CD14-positive monocyte (primary cell): ENCODE measurements at regions of chr1 and their contacts with region 1.

Region 1: DNA sequence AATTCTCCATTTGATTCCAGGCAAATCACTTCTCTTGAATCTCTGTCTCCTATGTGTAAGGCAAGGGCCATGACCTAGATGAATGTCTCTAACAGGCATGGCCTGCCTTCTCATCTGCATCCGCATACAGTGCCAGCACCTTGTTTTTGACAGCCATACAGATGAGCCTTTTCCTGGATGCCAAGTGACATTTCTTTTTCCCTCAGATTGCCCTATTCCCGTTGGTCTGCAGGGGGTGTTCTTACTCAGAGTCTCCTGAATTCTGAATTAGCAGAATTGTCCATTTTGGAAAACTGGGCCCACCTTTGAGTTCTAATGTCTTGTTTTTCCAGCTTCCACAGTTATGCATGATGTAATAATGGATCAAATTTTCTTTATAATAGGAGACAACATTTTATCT is 88.0 kb upstream of the ADAR start:
- DNase-seq: no peak
- H3K4me3 ChIP-seq: no peak overlapping the region
- H3K4me3 Mint-ChIP-seq: no peak overlapping the region
- H3K27ac ChIP-seq: no peak overlapping the region
- H3K27ac Mint-ChIP-seq: no peak overlapping the region
- H3K4me1 ChIP-seq: peaks cover 15 to 25% of the 10 kb centered on the region in 2 donors
- H3K4me1 Mint-ChIP-seq: peaks cover 21% of the 10 kb centered on the region
- H3K27me3 ChIP-seq: peaks cover 0 to 3% of the 10 kb centered on the region in 2 donors
- H3K27me3 Mint-ChIP-seq: peaks cover 0 to 10% (median 4%) of the 10 kb centered on the region in 3 donors
- CTCF ChIP-seq: peak; percentile 17

Region 2: GRCh38 chr1:154751690-154752089 is 55.7 kb after region 1 on chr1:
- intact Hi-C with region 1: loop called in 1 of 2 experiments (anchors 10 kb)
- DNase-seq: peak; percentile 65 to 78 (median 76)
- H3K4me3 ChIP-seq: no peak overlapping the region
- H3K4me3 Mint-ChIP-seq: peak overlapping the region in 1 of 2 donors; percentile 20
- H3K27ac ChIP-seq: peak overlapping the region in 1 of 2 donors; percentile 42
- H3K27ac Mint-ChIP-seq: peak overlapping the region; percentile 33 to 87 (median 78)
- H3K4me1 ChIP-seq: peaks cover 40 to 52% of the 10 kb centered on the region in 2 donors
- H3K4me1 Mint-ChIP-seq: peaks cover 51% of the 10 kb centered on the region
- H3K27me3 ChIP-seq: no peaks in the 10 kb centered on the region
- H3K27me3 Mint-ChIP-seq: peaks cover 0 to 7% (median 5%) of the 10 kb centered on the region in 3 donors
- CTCF ChIP-seq: no peak